GM10248 (cell line): ENCODE measurements at regions of chr3 and their contacts with region 1.

Region 1: DNA sequence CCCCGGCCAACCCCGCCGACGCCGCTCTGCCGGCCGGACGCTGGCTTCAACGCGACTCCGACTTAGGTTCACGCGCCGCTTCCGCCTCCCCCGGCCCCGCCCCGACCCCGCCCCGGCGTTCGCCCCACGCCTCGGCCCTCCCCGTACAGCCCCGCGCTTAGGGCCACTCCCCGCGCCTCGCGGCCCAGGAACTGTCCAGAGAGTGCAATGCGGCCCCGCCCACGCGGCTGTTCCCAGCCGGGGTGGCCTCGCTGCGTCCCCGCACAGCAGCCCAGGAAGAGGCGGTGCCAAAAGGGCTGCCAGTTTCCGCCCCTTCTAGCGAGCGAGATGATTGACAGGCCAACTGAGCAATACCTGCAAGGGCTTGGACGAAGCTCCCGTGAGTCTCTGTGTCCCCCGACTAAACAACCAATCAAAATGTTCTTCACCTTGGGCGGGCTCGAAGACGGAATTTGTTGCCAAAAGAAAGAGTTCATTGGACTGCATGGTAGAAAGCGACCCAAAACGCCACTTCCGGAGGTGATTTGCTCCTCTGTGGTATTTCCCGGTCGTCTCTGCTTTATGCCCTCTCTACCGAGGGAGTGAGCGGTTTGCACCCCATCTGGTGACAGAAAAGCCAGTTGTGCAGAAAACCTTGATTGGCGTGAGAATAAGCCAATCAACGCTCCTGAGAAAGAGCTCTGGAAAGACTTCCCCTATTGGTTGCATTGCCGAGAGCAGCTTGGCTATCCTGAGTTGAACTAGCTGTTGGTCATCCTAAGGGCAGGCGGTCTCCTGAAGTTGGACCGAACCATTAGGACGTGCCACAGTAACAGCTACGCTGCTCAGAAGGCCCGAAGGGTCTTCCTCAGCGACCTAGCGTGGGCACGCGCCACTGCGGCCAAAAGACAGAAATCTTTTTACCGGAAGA is at the start of gene UBP1:
- DNase-seq: peak; percentile 96
- CTCF ChIP-seq: no peak

Region 2: GRCh38 chr3:33428734-33429133 is 11.8 kb before region 1 on chr3:
- CTCF ChIA-PET with region 1: interaction called, 21 read pairs
- POLR2A ChIA-PET with region 1: interaction called, 4 read pairs
- DNase-seq: no peak
- CTCF ChIP-seq: no peak